Right ventricle myocardium superior (tissue), 1 donor: ENCODE measurements at regions of chr1 and their contacts with region 1.

Region 1: GRCh38 chr1:205485338-205486228 is 18.9 kb upstream of the CDK18 start:
- DNase-seq: peak; percentile 68
- ATAC-seq: peak; percentile 76

Region 2: DNA sequence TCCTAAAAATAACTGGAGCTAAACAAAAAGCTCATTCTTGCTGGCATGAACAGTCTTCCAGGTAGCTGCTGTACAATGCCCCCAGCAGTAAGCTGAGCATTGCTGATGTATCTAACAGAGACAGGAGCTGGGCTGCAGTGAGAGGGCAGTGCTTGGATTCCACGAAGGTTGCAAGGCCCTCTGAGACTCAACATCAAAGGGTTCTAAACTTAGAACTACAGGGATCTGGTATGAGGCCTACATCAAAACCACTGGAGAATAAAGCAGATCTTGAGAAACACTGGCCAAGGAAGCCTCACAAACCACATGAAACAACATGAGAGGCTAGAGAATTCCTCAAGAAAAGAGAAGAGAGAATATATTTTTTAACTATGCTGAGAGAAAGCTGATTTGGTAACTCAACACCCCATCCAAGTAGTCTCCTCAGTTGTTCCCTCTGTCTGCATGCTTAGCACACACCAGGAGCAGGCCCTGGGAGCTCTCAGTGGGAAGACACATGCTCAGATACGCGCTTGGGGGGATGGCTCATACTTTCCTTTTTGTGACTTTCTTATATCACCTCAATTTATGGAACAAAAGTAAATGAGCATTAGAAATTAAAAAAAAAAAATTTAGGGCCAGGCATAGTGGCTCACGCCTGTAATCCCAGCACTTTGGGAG is 301.8 kb before region 1 on chr1:
- intact Hi-C with region 1: no loop called
- DNase-seq: no peak
- ATAC-seq: peak; percentile 62

Region 3: DNA sequence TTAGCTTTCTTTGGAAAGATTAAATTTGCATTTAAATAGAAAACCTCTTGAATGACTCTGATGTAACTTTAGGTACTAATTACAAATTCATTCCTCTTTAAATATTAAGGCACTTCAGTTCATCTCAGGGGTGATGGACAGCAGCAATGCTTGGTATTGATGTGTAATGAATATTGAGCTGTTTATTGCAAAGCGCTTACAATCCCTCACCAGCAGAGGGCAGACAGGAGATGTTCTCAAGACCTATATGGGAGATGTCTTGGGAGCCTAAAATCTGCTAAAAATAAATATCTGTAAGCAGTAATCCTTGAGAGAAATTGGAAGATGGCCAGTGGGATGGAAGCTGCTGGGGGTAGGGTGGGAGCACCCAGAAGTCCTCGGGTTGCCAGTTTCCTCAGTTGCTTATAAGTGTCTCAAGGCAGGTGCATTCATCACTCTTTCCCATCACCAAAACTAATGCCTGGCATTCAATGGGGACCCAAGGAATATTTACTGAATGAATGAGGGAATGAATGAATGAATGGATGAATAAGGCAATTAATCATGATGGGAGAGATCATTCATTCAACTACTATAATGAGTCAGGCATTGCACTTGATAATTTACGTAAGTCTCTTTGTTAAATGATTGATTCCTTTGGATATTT is 131.2 kb before region 1 on chr1:
- intact Hi-C with region 1: loop called (anchors 10 kb)
- DNase-seq: no peak
- ATAC-seq: peak; percentile 71

Region 4: GRCh38 chr1:205396967-205397616 is 88.5 kb before region 1 on chr1:
- intact Hi-C with region 1: loop called (anchors 2 kb)
- DNase-seq: no peak
- ATAC-seq: peak; percentile 73

Region 5: GRCh38 chr1:205523891-205524793 is 38.6 kb after region 1 on chr1:
- intact Hi-C with region 1: loop called (anchors 1 kb)
- DNase-seq: peak; percentile 85
- ATAC-seq: peak; percentile 67